PC-3 (cell line): ENCODE measurements at regions of chr2 and their contacts with region 1.

Region 1: GRCh38 chr2:214401580-214401979 is 9.3 kb upstream of the VWC2L start:
- DNase-seq: peak; percentile 34
- ATAC-seq: peak; percentile 66
- H3K4me3 ChIP-seq: no peak overlapping the region
- H3K27ac ChIP-seq: no peak overlapping the region
- H3K4me1 ChIP-seq: no peaks in the 10 kb centered on the region
- H3K27me3 ChIP-seq: no peaks in the 10 kb centered on the region
- CTCF ChIP-seq: no peak

Region 2: DNA sequence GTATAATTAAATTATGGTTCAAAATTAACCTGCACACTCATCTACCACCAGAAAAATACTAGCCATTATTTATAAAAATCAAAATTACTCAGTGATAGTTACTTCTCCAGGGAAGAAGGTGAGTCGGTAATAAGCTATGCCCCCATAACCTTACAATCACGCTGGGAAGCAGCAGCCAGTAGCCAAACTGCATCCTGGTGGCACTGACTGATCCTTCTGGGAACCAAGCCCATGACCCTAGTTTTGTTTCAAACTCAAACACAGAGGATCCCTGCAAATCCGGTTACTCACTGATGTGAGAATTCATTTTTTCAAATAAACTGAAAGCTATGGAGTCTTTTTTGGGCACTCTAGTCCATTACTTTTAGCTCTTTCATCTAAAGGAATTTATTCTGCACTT is 78.9 kb before region 1 on chr2:
- CTCF ChIA-PET with region 1: no interaction called
- POLR2A ChIA-PET with region 1: interaction called, 11 read pairs
- intact Hi-C with region 1: no loop called
- DNase-seq: peak; percentile 56
- ATAC-seq: peak; percentile 91
- H3K4me3 ChIP-seq: no peak overlapping the region
- H3K27ac ChIP-seq: peak overlapping the region; percentile 53
- H3K4me1 ChIP-seq: 0 out of 2 replicates have a peak, but pooled peaks cover 5% of the 10 kb centered on the region
- H3K27me3 ChIP-seq: no peaks in the 10 kb centered on the region
- CTCF ChIP-seq: no peak

Region 3: DNA sequence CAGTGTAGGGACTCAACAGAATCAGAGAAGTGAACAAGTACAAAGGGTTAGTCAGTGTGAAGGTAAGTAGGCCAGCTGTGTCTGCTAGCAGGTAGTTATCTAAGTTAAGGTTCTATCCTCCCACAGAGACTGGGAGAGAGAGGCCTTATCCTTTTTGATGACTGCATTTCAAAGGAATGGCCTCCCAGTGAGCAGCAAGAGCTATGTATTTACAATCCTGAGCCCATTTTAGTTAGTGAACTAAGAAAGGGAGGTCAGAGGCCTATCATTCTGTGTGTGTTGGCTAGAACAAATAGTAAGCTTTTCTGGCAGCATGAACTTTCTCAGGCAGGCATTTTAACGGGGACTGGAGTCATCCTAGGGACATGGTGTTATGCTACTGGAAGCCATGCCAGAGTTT is 192.1 kb after region 1 on chr2:
- CTCF ChIA-PET with region 1: no interaction called
- POLR2A ChIA-PET with region 1: no interaction called
- intact Hi-C with region 1: no loop called
- DNase-seq: peak; percentile 41
- ATAC-seq: peak; percentile 64
- H3K4me3 ChIP-seq: no peak overlapping the region
- H3K27ac ChIP-seq: no peak overlapping the region
- H3K4me1 ChIP-seq: no peaks in the 10 kb centered on the region
- H3K27me3 ChIP-seq: no peaks in the 10 kb centered on the region
- CTCF ChIP-seq: no peak